K562 (cell line): ENCODE measurements at regions of chr6 and their contacts with region 1.

Region 1: GRCh38 chr6:73640179-73640750 is 13.5 kb downstream of the SLC17A5 start:
- DNase-seq: no peak
- ATAC-seq: no peak
- H3K4me3 ChIP-seq: no peak overlapping the region
- H3K27ac ChIP-seq: no peak overlapping the region
- H3K4me1 ChIP-seq: no peaks in the 10 kb centered on the region; a peak in 1 of 5 replicates
- H3K27me3 ChIP-seq: no peaks in the 10 kb centered on the region
- CTCF ChIP-seq: no peak
- EP300 ChIP-seq: no peak
- POLR2A ChIP-seq: no peak
- RAD21 ChIP-seq: no peak

Region 2: GRCh38 chr6:73653571-73654424 is 13.5 kb after region 1 on chr6 and contains the start of gene SLC17A5:
- CTCF ChIA-PET with region 1: no interaction called
- POLR2A ChIA-PET with region 1: interaction called, 11 read pairs
- in situ Hi-C with region 1: no loop called
- intact Hi-C with region 1: no loop called
- DNase-seq: peak; percentile 92 to 96 (median 94)
- ATAC-seq: peak; percentile 96
- H3K4me3 ChIP-seq: peak within 1 kb of the TSS; percentile 90
- H3K27ac ChIP-seq: peak within 1 kb of the TSS; percentile 90
- H3K4me1 ChIP-seq: peaks cover 5 to 10% of the 10 kb centered on the region in 2 experiments; a peak in 3 of 5 replicates
- H3K27me3 ChIP-seq: no peaks in the 10 kb centered on the region
- CTCF ChIP-seq: no peak
- EP300 ChIP-seq: no peak; the same call in 1 of the 2 replicates
- POLR2A ChIP-seq: peak; percentile 87
- RAD21 ChIP-seq: no peak
- polyA plus RNA-seq, gene SLC17A5: 1.3 to 1.8 TPM

Region 3: DNA sequence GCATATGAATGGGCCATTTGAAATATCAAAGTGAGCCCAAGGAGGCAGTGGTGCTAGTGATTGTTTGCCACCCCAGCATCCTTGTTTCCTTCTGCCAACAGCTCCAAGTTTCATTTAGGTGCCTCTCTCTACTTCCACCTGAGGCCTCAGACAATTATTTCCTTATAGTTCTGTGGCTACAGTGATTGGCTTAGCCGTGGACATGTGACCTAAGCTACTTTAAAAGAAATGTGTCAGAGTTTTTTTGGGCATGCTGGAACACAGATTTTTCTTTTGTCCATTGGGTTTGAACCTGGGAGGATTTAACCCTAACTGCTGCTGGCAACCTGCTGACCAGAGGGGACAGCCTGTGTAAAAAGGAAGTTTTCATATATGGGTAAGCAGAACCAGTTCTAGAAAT is 375.2 kb after region 1 on chr6:
- CTCF ChIA-PET with region 1: no interaction called
- POLR2A ChIA-PET with region 1: no interaction called
- in situ Hi-C with region 1: no loop called
- intact Hi-C with region 1: no loop called
- DNase-seq: no peak
- ATAC-seq: no peak
- H3K4me3 ChIP-seq: no peak overlapping the region
- H3K27ac ChIP-seq: no peak overlapping the region
- H3K4me1 ChIP-seq: no peaks in the 10 kb centered on the region
- H3K27me3 ChIP-seq: no peaks in the 10 kb centered on the region
- CTCF ChIP-seq: no peak
- EP300 ChIP-seq: no peak
- POLR2A ChIP-seq: no peak
- RAD21 ChIP-seq: no peak